ENCODE measurements at regions of chr1 and their contacts with region 1.

Region 1: DNA sequence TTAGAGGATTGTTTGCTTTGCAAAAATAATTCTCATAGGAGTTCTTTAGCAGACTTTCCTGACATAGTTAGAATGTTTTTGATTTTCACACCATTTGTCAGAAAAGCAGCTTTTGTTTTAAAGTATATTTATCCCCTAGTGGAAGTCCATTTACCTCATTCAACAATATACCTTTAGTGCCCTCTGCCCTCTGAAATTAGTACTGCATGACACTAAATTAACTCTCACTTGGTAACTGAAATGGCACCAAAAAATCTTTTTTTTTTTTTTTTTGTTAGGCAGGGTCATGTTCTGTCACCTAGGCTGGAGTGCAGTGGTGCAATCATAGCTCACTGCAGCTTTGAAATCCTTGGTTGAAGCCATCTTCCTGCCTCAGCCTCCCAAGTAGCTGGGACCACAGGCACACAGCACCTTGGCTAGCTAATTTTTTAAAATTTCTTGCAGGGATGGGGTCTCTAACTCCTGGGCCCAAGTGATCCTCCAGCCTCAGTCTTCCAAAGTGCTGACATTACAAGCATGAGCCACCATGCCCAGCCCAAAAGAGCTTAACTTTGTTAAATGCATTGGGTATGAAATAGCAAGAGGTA is 13.6 kb downstream of the LRRC42 start:
- DNase-seq: no peak
- H3K4me3 Mint-ChIP-seq: no peak overlapping the region
- H3K27ac Mint-ChIP-seq: no peak overlapping the region
- H3K4me1 Mint-ChIP-seq: peaks cover 12% of the 10 kb centered on the region
- H3K27me3 Mint-ChIP-seq: no peaks in the 10 kb centered on the region

Region 2: GRCh38 chr1:53878492-53879105 is 81.2 kb before region 1 on chr1:
- intact Hi-C with region 1: loop called (anchors 1 kb)
- DNase-seq: no peak
- H3K4me3 Mint-ChIP-seq: no peak overlapping the region
- H3K27ac Mint-ChIP-seq: no peak overlapping the region
- H3K4me1 Mint-ChIP-seq: peaks cover 6% of the 10 kb centered on the region
- H3K27me3 Mint-ChIP-seq: no peaks in the 10 kb centered on the region

Region 3: DNA sequence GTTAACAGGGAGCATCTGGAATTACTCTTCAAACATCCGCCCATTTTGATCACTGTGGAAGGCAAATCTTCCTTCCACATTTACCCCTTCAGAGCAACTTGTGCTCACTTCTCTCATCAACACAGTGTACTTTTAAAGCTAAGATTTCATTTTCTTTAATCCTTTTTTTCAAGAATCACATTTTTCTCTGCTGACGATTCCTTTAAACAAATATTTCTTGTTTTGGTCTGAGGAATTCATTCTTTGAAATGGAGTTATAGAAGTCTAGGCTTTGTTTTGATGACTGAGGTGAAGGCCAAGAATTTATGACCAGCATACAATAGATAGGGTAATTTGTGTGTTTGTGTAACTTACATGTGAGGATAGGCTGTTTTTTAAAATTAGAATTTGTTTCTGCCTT is 12.0 kb after region 1 on chr1:
- intact Hi-C with region 1: no loop called
- DNase-seq: no peak
- H3K4me3 Mint-ChIP-seq: no peak overlapping the region
- H3K27ac Mint-ChIP-seq: no peak overlapping the region
- H3K4me1 Mint-ChIP-seq: peaks cover 2% of the 10 kb centered on the region
- H3K27me3 Mint-ChIP-seq: no peaks in the 10 kb centered on the region

Region 4: DNA sequence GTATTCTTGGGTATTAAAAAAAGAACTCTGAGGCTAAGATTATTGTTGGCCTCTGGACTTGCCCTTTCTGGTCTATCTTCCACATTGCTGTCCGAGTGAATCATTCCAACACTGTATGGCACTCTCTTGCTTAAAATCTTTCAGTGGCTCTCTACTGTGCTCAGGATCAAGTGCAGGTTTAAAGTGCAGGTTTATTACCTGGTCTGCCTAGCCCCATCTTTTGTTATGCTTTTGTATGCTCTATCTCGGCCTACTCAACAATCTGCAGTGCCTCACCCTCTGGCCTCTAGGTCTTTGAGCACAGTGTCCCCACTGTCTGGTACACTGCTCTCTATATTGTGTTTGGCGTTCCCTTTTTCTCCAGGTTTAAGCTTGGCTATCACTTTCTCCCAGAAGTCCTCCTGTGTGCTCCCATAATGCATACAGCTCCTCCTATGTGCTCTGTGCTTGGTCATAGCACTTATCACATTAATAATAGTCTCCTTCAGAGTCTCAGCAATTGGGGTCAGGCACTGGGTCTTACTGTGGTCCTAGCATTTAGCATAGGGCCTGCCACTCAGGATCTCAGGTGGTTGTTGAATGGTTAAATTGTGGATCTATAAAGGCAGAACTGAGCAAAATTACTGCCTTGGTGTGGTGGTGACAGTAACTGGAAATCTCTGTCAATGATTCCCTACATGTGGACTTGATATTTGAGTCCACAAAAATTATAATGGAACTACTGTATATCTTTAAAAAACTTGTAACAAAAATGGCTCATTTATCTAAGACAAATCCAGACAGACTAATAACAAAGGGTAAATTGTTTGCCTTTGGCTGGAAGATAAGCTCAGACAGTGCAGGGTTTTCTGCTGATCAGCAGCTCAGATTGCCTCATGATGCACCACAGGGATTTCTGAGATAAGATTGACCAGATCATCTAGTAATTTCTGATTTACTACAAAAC is 68.8 kb after region 1 on chr1:
- intact Hi-C with region 1: no loop called
- DNase-seq: no peak
- H3K4me3 Mint-ChIP-seq: no peak overlapping the region
- H3K27ac Mint-ChIP-seq: no peak overlapping the region
- H3K4me1 Mint-ChIP-seq: no peaks in the 10 kb centered on the region
- H3K27me3 Mint-ChIP-seq: no peaks in the 10 kb centered on the region

Region 5: DNA sequence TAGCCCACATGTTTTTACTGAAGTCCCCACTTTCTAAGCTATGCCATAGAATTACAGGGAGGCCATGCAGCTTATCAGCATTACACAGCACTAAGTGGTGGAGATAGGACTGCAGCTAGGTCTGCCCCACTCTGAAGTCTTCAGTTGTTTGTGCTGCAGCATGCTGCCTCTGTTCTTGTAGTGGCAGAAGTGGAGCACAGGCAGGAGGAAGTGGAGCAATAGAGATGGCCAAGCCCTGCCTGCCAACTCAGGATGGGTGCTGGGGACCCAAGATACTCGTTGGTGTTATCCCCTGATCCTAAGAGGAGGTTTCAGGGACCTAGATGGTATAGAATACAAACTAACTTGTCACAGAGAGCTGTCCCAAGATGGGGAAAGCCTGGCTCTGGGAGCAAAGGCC is 253.1 kb after region 1 on chr1:
- intact Hi-C with region 1: no loop called
- DNase-seq: no peak
- H3K4me3 Mint-ChIP-seq: no peak overlapping the region
- H3K27ac Mint-ChIP-seq: no peak overlapping the region
- H3K4me1 Mint-ChIP-seq: no peaks in the 10 kb centered on the region
- H3K27me3 Mint-ChIP-seq: no peaks in the 10 kb centered on the region

Measured in activated T-helper 2 cell treated with anti-CD3 and anti-CD28 coated beads, Interferon-gamma antibody, Interleukin-2, Interleukin-4, amounts not matched to agents 10 μg/mL and 5 μg/mL and 100 μg/mL, durations not matched to agents 14 hours and 24 hours and 36 hours (primary cell).